ENCODE measurements at regions of chr2 and their contacts with region 1.

Region 1: DNA sequence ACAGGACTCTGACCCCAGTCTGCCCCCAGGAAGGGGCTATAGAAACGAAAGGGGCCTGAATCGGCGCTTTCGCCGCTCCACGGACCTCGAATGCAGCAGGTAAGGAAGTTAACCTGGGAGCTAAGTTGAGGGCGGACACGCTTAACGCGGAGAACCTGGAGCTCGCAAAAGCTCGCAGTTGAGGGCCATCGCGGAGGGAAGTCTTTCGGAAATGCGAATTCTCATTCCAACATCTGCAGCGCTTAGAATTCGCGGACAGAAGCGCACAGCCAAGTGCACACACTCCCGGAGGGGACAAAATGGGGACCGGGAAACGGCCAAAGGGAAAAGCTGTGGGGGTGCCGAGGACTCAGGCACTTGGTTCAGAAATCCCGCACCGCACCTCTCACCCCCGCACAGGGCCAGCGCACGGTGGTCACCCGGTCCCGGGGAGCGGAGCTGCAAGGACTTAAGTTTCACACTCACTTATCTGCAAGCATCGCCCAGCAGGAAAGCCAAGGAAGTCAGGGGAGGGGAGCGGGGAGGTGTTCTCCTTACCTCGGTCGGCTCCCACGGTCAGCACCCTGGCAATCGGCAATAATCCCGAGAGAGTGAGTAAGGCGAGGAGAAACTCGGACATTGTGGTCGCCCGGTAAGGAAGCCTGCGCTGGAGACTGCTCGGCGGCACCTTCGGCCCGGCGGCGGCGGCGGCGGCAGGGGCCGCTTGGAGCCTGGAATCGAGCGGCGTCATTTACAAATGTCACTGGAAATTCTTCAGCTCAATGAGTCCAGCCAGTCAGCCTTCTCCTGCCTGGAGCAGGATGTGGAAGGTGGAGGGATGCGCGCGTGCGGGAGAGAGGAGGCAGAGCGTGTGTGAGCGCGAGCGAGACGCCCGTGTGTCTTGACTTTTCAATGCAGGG is 456 bp downstream of the LRP1B start:
- DNase-seq: no peak
- ATAC-seq: peak; percentile 40
- H3K4me3 ChIP-seq: peak overlapping the region; percentile 64; the same call in 1 of the 2 replicates
- H3K27ac ChIP-seq: no peak overlapping the region
- H3K4me1 ChIP-seq: peaks cover 5% of the 10 kb centered on the region; the same call in 1 of the 2 replicates
- H3K27me3 ChIP-seq: peaks cover 12 to 16% of the 10 kb centered on the region in 2 experiments
- CTCF ChIP-seq: no peak
- EP300 ChIP-seq: no peak
- POLR2A ChIP-seq: no peak
- RAD21 ChIP-seq: no peak

Region 2: GRCh38 chr2:142140434-142140845 is 10.1 kb after region 1 on chr2:
- CTCF ChIA-PET with region 1: interaction called, 10 read pairs
- POLR2A ChIA-PET with region 1: no interaction called
- RAD21 ChIA-PET with region 1: no interaction called
- SMC1A ChIA-PET with region 1: interaction called, 5 read pairs
- in situ Hi-C with region 1: no loop called
- intact Hi-C with region 1: no loop called
- DNase-seq: no peak
- ATAC-seq: peak; percentile 47; the same call in 1 of the 3 replicates
- H3K4me3 ChIP-seq: no peak overlapping the region
- H3K27ac ChIP-seq: no peak overlapping the region
- H3K4me1 ChIP-seq: no peaks in the 10 kb centered on the region
- H3K27me3 ChIP-seq: no peaks in the 10 kb centered on the region
- CTCF ChIP-seq: peak; percentile 26 to 46 (median 31); a peak in 3 of 6 replicates
- EP300 ChIP-seq: no peak
- POLR2A ChIP-seq: no peak
- RAD21 ChIP-seq: peak; percentile 65